Mammary epithelial cell (primary cell): ENCODE measurements at regions of chr14 and their contacts with region 1.

Region 1: DNA sequence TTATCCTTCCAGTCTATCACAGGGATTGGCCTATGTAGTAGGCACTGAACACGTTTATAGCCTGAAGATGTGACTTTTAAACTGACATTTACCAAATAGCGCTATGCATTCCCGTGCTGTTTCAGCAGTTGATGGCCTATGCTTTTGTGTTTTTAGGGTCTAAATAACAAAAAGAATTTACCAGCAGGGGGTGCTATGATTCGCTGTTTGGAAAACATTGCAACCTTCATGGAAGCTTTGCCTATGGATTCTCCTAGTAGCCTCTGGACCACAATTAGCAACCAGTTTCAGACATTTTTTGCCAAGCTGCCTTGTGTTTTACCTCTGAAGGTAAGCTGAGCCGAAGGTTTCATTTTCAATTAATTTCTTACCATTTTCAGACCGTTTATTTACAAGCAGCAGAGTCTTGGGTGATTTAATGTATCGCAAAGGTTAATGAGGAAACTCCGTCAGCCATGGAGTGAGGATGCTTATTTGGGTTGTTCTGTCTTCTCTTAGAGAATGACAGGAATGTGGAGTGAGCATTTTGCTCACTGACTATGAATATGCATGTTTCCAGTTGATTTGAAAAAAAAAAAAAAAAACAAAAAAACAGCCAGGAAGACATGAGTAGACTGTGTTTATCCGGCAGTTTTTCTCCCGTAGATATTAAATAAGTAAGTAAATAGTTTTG is 133.1 kb downstream of the PRIMA1 start:
- DNase-seq: peak; percentile 40
- H3K4me3 ChIP-seq: no peak overlapping the region
- H3K27ac ChIP-seq: no peak overlapping the region
- H3K4me1 ChIP-seq: no peaks in the 10 kb centered on the region
- H3K27me3 ChIP-seq: no peaks in the 10 kb centered on the region
- CTCF ChIP-seq: peak; percentile 39 to 57

Region 2: DNA sequence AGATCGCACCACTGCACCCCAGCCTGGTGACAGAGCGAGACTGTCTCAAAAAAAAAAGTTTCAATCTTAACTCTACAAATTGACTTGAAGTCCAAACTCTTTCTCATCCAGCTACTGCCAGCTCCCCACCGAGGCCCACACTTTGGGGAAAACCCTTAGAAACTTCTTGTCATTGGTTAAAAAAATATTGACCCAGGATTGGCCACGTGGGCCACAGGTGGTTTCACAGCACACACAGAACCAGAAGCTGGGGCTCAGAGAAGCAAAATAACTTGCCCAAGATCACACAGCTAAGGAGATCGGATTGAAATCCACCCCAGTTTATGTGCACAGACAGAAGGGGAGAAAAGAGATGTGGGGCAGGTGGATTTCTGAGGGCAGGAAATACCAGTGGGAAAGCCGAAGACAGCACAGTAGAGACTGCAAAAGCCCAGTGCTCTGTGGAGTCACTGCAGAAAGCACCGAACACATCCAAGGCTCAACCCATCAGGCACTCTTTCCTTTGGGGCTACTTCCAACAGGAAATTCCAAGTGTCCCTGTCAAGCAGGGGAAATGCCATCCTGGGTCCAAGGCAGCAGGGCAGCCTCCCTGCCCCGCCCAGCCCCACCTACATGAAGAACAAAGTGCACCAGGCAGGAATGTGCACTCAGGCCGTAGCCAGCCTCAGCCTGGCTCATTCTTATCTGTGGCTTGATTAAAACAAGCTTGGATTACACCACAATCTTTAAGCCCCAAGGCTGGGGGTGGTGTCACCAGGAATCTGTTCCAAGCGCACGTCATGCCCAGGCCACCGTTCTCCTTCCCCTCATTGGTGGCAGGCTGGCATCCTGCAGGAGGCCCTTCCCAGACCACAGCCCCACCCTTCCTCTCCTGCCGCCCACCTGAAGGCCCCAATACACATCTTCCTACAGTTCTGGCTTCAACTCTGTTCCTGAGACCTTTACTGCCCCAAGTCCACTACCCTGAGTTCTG is 612.0 kb before region 1 on chr14:
- CTCF ChIA-PET with region 1: no interaction called
- dilution Hi-C with region 1: no loop called
- in situ Hi-C with region 1: no loop called
- intact Hi-C with region 1: no loop called
- DNase-seq: peak; percentile 96
- H3K4me3 ChIP-seq: peak overlapping the region in 1 of 3 experiments; percentile 16
- H3K27ac ChIP-seq: peak overlapping the region; percentile 97
- H3K4me1 ChIP-seq: peaks cover 79% of the 10 kb centered on the region
- H3K27me3 ChIP-seq: no peaks in the 10 kb centered on the region
- CTCF ChIP-seq: no peak

Region 3: DNA sequence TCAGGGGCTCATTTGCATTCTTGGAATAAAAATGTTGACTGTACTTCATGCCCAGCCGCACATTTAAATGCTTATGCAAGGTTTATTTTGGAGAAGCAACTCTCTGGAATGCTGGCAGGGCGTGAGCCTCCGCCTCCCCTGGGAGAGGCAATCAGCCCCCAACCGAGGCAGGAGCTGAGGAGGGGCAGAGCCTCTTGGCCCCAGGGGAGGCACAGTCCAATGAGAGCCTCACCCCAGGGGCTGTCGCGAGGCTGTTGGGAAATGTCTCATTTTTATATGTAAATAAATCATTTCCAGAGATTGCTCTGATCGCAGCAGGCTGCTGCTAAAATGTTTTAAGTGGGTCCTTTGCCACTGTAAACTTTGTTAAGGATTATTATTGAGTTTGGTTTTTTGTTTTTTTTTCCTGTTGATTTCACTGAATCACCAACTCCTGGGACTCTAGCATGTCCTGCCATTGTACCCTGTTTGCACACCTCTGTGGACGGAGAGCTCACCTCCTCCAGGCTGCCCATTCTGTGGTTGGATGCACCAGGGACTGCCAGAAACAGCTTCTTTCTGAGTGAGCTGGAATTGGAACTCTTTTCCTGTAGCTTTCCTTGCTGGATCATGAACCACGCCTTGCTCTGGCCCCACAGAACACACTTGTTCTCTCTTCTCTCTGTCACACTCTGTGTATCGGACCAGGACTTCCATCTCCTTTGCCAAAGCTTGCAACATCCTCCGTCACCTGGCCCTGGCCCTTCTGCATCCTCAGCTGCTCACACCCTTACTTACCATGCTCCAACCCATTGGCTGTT is 225.0 kb after region 1 on chr14:
- CTCF ChIA-PET with region 1: no interaction called
- dilution Hi-C with region 1: no loop called
- in situ Hi-C with region 1: loop called in 1 of 2 experiments (anchors 10 kb)
- intact Hi-C with region 1: no loop called
- DNase-seq: no peak
- H3K4me3 ChIP-seq: peak overlapping the region in 1 of 3 experiments; percentile 8
- H3K27ac ChIP-seq: no peak overlapping the region
- H3K4me1 ChIP-seq: no peaks in the 10 kb centered on the region
- H3K27me3 ChIP-seq: no peaks in the 10 kb centered on the region
- CTCF ChIP-seq: no peak

Region 4: GRCh38 chr14:93892923-93893558 is 237.8 kb after region 1 on chr14:
- CTCF ChIA-PET with region 1: no interaction called
- dilution Hi-C with region 1: no loop called
- in situ Hi-C with region 1: loop called (anchors 10 kb)
- intact Hi-C with region 1: loop called (anchors 1 kb)
- DNase-seq: peak; percentile 41
- H3K4me3 ChIP-seq: no peak overlapping the region
- H3K27ac ChIP-seq: no peak overlapping the region
- H3K4me1 ChIP-seq: no peaks in the 10 kb centered on the region
- H3K27me3 ChIP-seq: no peaks in the 10 kb centered on the region
- CTCF ChIP-seq: peak; percentile 98 to 99

Region 5: DNA sequence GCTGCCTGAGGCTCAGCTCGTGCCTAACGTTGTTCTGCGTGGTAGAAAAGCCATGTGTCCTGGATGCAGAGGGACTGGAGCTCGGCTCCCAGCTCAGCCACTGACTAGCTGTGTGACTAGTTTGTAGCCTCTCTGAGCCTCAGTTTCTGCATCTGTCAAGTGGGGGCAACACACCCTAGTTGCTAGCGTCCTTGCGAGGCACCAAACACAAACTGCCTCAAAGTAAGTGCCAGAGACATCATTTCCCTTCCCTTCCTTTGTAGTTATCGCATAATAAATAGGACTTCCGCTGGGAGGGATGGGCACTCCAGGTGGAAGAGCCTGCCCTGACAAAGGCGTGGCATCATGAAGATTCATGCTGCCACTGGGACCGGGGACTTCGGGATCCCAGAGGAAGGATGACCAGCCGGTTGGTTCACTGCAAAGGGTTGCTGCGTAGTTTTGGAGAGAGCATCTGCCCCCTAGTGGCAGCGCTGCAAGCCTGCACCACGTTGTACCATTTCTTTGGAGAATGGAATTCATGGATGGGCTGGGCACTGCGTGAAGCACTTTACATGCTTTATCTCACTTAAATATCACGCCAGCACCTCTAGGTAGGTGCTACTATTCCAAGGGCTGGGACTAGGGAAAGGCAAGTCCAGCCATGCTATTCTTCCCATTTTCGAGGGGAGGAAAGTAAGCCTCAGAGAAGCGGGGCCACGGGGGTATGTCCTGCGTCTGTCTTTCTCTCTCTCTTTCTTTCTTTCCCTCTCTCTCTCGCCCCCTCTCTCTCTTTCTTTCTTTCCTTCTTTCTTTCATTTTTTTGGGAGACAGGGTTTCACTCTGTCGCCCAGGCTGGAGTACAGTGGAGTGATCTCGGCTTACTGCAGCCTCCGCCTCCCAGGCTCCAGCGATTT is 346.5 kb after region 1 on chr14:
- CTCF ChIA-PET with region 1: no interaction called
- dilution Hi-C with region 1: no loop called
- in situ Hi-C with region 1: loop called in 1 of 2 experiments (anchors 10 kb)
- intact Hi-C with region 1: loop called (anchors 1 kb)
- DNase-seq: peak; percentile 65
- H3K4me3 ChIP-seq: no peak overlapping the region
- H3K27ac ChIP-seq: no peak overlapping the region
- H3K4me1 ChIP-seq: peaks cover 17% of the 10 kb centered on the region
- H3K27me3 ChIP-seq: no peaks in the 10 kb centered on the region
- CTCF ChIP-seq: peak; percentile 97 to 100